CD8-positive, alpha-beta T cell (primary cell): ENCODE measurements at regions of chr17 and their contacts with region 1.

Region 1: GRCh38 chr17:58200017-58200633 is 7.6 kb downstream of the EPX start:
- DNase-seq: peak; percentile 13 to 71 (median 56)
- ATAC-seq: peak; percentile 67
- H3K4me3 ChIP-seq: no peak overlapping the region
- H3K4me3 Mint-ChIP-seq: no peak overlapping the region
- H3K27ac ChIP-seq: no peak overlapping the region
- H3K27ac Mint-ChIP-seq: no peak overlapping the region
- H3K4me1 ChIP-seq: no peaks in the 10 kb centered on the region
- H3K4me1 Mint-ChIP-seq: peaks cover 3% of the 10 kb centered on the region
- H3K27me3 ChIP-seq: peaks cover 0 to 5% of the 10 kb centered on the region in 2 experiments
- H3K27me3 Mint-ChIP-seq: peaks cover 15% of the 10 kb centered on the region
- CTCF ChIP-seq: peak; percentile 59

Region 2: DNA sequence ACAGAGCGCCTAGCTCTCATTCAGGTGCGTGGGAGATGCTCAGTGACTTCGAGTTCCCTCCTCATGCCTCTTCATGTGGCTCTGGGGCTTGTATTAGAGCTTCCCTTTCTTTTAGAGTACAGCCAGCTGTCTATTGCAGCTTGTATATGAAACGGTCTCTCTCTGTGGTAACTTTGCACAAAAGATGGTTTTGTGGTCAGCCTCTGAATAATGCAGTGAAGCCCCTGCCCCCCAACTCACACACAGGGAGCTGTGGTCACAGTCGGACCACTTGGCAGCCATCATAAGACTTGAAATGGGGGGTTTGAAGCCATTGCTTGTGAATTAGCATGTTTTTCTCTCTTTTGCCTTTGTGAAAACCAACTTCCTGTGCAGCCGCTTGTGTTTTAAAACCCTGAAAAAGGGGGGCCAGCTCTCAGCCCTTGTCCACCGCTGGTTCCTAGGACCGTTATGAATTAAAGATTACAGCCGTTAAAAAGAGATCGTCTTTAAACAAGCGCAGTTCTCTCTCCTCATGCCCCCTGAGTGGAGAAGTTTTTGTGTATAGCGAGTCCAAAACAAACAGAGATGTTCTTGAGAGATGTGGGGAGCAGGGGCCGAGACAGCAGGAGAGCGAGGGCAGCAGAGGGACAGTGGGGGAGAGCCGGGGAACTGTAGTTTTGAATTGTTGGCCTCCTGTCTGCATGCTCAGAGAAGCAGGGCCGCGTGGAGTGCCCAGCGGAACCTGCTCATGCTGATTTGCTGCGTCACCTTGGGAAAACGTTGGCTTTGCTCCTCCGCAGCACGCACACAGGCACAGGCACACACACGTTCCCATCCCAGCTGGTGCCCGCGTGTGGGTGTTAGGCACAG is 744.8 kb before region 1 on chr17:
- CTCF ChIA-PET with region 1: no interaction called
- POLR2A ChIA-PET with region 1: no interaction called
- intact Hi-C with region 1: no loop called
- DNase-seq: peak in 8 of 9 experiments; percentile 9 to 72 (median 46)
- ATAC-seq: peak; percentile 78
- H3K4me3 ChIP-seq: peak overlapping the region in 1 of 2 experiments; percentile 3
- H3K4me3 Mint-ChIP-seq: peak overlapping the region; percentile 71
- H3K27ac ChIP-seq: peak overlapping the region in 1 of 2 experiments; percentile 38
- H3K27ac Mint-ChIP-seq: peak overlapping the region; percentile 89
- H3K4me1 ChIP-seq: peaks cover 46% of the 10 kb centered on the region
- H3K4me1 Mint-ChIP-seq: peaks cover 66% of the 10 kb centered on the region
- H3K27me3 ChIP-seq: no peaks in the 10 kb centered on the region
- H3K27me3 Mint-ChIP-seq: no peaks in the 10 kb centered on the region
- CTCF ChIP-seq: no peak

Region 3: DNA sequence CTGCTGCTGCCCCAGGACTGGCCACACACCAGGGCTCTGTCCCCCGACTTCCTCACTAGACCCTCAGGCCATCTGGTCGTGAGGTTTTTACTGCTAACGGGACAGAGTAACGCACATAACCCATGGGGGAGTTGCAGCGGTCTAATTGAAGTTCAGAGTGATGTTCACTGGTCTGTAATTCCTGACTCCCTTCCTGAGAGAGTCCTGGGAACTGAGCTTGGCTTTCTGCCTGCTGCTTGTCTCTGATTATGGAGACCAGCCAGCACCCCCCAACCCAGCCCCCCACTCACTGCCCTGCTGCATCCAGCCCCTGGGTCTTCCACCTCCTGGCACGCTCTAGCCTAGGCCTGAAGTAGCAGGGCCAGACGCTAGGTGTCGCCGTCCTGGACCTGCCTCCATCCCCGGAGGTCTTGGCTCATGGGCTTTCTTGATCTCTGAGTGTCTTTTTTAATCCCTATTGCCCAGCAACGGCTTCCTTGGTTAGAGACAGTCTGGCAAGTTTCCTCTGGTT is 648.0 kb before region 1 on chr17:
- CTCF ChIA-PET with region 1: no interaction called
- POLR2A ChIA-PET with region 1: no interaction called
- intact Hi-C with region 1: no loop called
- DNase-seq: peak in 6 of 9 experiments; percentile 8 to 60 (median 34)
- ATAC-seq: peak; percentile 63
- H3K4me3 ChIP-seq: no peak overlapping the region
- H3K4me3 Mint-ChIP-seq: no peak overlapping the region
- H3K27ac ChIP-seq: no peak overlapping the region
- H3K27ac Mint-ChIP-seq: no peak overlapping the region
- H3K4me1 ChIP-seq: peaks cover 26% of the 10 kb centered on the region
- H3K4me1 Mint-ChIP-seq: peaks cover 57% of the 10 kb centered on the region
- H3K27me3 ChIP-seq: no peaks in the 10 kb centered on the region
- H3K27me3 Mint-ChIP-seq: no peaks in the 10 kb centered on the region
- CTCF ChIP-seq: no peak

Region 4: DNA sequence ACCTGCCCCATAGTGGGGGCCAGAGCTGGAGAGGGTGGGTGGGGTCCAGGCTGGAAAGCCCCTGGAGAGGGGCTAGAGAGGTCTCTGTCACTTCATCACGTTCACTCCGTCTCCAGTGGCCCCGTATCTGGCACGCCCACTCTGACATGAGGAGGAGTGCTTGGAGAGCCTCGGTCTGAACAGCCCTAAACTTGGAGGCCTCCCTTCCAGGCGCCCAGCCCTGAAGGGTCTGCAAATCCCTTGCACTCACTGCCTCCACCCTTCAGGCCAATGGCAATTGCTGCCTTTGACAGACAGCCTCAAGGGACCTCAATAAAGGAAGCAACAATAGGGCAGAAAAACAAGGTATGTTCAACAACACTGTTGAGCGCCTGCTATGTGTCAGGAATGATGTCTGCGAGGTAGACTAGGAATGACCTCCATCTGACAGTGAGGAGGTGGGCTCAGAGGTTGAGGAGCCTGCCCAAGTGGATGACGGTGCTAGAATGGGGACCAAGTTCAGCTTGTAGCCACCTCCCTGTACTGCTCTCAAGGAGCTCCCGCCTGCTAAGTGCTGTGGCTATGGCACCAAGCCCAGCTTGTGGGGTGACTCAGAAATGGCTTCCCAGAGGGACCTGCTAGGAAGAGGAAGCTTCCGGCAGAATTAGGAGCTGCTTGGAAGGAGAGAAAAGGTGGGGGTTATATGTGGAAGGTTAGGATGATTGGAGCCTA is 10.5 kb before region 1 on chr17:
- CTCF ChIA-PET with region 1: interaction called, 18 read pairs
- POLR2A ChIA-PET with region 1: interaction called, 3 read pairs
- intact Hi-C with region 1: no loop called
- DNase-seq: no peak
- ATAC-seq: no peak
- H3K4me3 ChIP-seq: no peak overlapping the region
- H3K4me3 Mint-ChIP-seq: no peak overlapping the region
- H3K27ac ChIP-seq: no peak overlapping the region
- H3K27ac Mint-ChIP-seq: no peak overlapping the region
- H3K4me1 ChIP-seq: no peaks in the 10 kb centered on the region
- H3K4me1 Mint-ChIP-seq: no peaks in the 10 kb centered on the region
- H3K27me3 ChIP-seq: no peaks in the 10 kb centered on the region
- H3K27me3 Mint-ChIP-seq: peaks cover 16% of the 10 kb centered on the region
- CTCF ChIP-seq: no peak

Region 5: GRCh38 chr17:58210922-58211321 is 10.8 kb after region 1 on chr17:
- CTCF ChIA-PET with region 1: interaction called, 12 read pairs
- POLR2A ChIA-PET with region 1: no interaction called
- intact Hi-C with region 1: no loop called
- DNase-seq: no peak
- ATAC-seq: no peak
- H3K4me3 ChIP-seq: no peak overlapping the region
- H3K4me3 Mint-ChIP-seq: no peak overlapping the region
- H3K27ac ChIP-seq: no peak overlapping the region
- H3K27ac Mint-ChIP-seq: no peak overlapping the region
- H3K4me1 ChIP-seq: no peaks in the 10 kb centered on the region
- H3K4me1 Mint-ChIP-seq: no peaks in the 10 kb centered on the region
- H3K27me3 ChIP-seq: no peaks in the 10 kb centered on the region
- H3K27me3 Mint-ChIP-seq: no peaks in the 10 kb centered on the region
- CTCF ChIP-seq: no peak

Region 6: DNA sequence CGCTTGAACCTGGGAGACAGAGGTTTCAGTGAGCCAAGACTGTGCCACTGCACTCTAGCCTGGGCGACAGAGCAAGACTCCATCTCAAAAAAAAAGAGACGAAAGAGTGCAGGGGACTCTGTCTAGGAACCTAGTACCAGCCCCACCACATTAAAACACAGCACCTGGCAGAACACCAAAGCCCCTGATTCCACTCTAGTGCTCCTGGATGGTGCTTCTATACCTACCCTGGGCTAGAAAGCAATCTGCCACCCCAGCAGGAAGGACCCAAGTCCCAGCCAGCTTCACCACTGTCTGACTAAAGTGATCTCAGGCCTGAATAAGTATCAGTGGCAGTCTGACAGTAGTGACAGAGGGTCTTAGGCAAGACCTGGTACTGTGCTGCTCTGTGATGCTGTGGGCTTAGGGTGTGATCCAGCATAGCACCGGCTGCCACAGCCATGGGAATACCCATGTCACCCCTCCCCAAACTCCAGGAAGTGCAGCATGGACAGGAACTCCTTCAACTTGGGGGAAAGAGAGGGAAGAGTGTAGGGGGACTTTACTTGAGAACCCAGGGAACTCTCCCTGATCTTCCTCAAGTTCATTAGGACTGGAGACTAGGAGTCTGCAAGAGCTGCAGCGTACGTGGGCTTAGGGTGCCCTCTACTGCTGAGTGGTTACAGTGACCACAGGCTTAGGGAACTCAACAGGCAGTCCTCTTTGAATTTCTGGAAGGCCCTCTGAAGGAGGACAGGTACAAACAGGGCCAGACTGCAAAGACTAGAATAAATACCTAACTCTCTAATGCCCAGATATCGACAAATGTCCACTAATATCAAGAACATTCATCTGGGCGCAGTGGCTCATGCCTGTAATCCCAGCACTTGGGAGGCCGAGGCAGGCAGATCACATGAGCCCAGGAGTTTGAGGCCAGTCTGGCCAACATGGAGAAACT is 247.2 kb after region 1 on chr17:
- CTCF ChIA-PET with region 1: interaction called, 4 read pairs
- POLR2A ChIA-PET with region 1: interaction called, 3 read pairs
- intact Hi-C with region 1: loop called in 1 of 2 experiments (anchors 2 kb)
- DNase-seq: peak; percentile 20 to 79 (median 58)
- ATAC-seq: no peak
- H3K4me3 ChIP-seq: no peak overlapping the region
- H3K4me3 Mint-ChIP-seq: no peak overlapping the region
- H3K27ac ChIP-seq: no peak overlapping the region
- H3K27ac Mint-ChIP-seq: no peak overlapping the region
- H3K4me1 ChIP-seq: no peaks in the 10 kb centered on the region
- H3K4me1 Mint-ChIP-seq: peaks cover 3% of the 10 kb centered on the region
- H3K27me3 ChIP-seq: no peaks in the 10 kb centered on the region
- H3K27me3 Mint-ChIP-seq: no peaks in the 10 kb centered on the region
- CTCF ChIP-seq: peak; percentile 60